ENCODE measurements at regions of chr2 and their contacts with region 1.

Region 1: DNA sequence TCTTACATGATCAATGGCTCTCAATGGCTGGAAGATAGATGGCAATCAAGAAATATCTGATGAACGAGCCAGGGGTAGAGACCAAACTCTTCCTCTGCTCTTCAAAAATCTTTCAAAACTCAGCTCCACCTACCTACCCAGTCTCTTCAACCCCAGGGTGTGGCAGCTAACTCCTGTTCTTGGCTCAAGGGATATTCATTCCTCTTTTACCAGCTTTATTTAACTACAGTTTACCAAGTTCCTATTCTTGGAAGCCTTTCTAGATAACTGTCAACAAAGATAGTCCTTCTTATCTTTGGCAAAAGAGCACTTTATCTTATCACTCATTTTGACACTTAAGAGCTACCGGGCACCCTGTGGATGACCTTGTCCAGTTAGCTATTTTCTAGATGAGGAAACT is 36.3 kb downstream of the EPHA4 start:
- DNase-seq: no peak

Region 2: DNA sequence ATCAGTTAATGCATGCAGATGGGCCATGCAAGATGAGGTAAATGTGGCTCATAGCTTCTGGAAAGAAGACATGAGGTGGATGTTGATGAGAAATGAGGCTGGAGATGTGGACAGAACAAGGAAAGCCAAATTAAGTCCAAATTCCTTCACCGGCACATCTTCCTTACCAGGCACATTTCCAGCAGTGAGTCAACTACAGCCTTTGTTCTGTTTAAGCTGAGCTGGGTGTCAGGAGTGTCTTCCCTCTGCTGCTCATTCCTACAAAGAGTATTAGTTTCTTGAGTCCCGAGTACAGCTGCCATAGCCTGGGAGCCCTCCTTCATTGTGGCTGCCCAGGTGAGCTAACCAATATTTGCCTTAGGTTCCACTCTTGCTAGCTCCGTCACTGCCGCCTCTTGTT is 963.4 kb before region 1 on chr2:
- intact Hi-C with region 1: loop called in 1 of 2 experiments (anchors 5 kb)
- DNase-seq: no peak